B cell (primary cell): ENCODE measurements at regions of chr12 and their contacts with region 1.

Region 1: DNA sequence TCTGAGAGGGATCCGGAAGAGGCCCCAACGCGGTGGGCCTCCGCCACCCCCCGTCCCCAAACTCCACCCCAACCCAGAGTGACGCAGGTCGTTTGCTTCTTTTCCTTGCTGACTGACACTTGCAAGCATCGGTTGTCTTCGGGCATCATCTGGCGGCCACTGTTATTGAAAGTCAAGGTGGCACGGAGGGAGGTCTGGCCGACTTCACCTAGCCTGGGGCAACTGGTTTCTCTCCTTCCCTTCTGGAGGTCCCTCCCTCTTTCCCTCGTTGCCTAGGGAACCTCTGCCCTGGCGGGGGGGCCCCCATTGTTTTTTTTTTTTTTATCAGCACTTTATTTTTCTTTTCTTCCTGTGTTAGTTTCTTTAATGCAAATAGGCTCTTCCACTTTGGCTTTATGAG is 241.8 kb downstream of the ALG10 start:
- DNase-seq: no peak
- ATAC-seq: no peak
- H3K4me3 ChIP-seq: no peak overlapping the region
- H3K4me3 Mint-ChIP-seq: no peak overlapping the region
- H3K27ac ChIP-seq: no peak overlapping the region
- H3K27ac Mint-ChIP-seq: no peak overlapping the region
- H3K4me1 ChIP-seq: no peaks in the 10 kb centered on the region
- H3K4me1 Mint-ChIP-seq: no peaks in the 10 kb centered on the region
- H3K27me3 ChIP-seq: no peaks in the 10 kb centered on the region
- H3K27me3 Mint-ChIP-seq: no peaks in the 10 kb centered on the region
- CTCF ChIP-seq: no peak

Region 2: DNA sequence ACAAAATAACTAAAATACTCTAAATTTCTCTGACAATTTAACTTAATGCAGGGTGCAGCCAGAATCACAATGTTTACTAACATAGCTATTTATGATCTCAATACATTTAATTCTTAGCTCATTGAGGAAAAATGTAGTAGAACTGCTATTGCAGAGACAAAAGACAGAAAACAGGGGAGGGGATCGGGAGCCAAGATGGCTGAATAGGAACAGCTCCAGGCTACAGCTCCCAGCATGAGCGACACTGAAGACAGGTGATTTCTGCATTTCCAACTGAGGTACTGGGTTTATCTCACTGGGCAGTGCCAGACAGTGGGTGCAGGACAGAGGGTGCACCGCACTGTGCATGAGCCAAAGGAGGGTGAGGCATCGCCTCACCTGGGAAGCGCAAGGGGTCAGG is 131.0 kb before region 1 on chr12:
- CTCF ChIA-PET with region 1: no interaction called
- POLR2A ChIA-PET with region 1: no interaction called
- intact Hi-C with region 1: no loop called
- DNase-seq: no peak
- ATAC-seq: no peak
- H3K4me3 ChIP-seq: no peak overlapping the region
- H3K4me3 Mint-ChIP-seq: no peak overlapping the region
- H3K27ac ChIP-seq: no peak overlapping the region
- H3K27ac Mint-ChIP-seq: no peak overlapping the region
- H3K4me1 ChIP-seq: no peaks in the 10 kb centered on the region
- H3K4me1 Mint-ChIP-seq: peaks cover 8% of the 10 kb centered on the region
- H3K27me3 ChIP-seq: no peaks in the 10 kb centered on the region
- H3K27me3 Mint-ChIP-seq: peaks cover 9% of the 10 kb centered on the region
- CTCF ChIP-seq: no peak

Region 3: GRCh38 chr12:34253674-34254073 is 10.5 kb before region 1 on chr12:
- CTCF ChIA-PET with region 1: no interaction called
- POLR2A ChIA-PET with region 1: interaction called, 10 read pairs
- intact Hi-C with region 1: no loop called
- DNase-seq: no peak
- ATAC-seq: no peak
- H3K4me3 ChIP-seq: no peak overlapping the region
- H3K4me3 Mint-ChIP-seq: no peak overlapping the region
- H3K27ac ChIP-seq: no peak overlapping the region
- H3K27ac Mint-ChIP-seq: no peak overlapping the region
- H3K4me1 ChIP-seq: no peaks in the 10 kb centered on the region
- H3K4me1 Mint-ChIP-seq: no peaks in the 10 kb centered on the region
- H3K27me3 ChIP-seq: no peaks in the 10 kb centered on the region
- H3K27me3 Mint-ChIP-seq: no peaks in the 10 kb centered on the region
- CTCF ChIP-seq: no peak